ENCODE measurements at regions of chr6 and their contacts with region 1.

Region 1: GRCh38 chr6:7725849-7726415 is at the start of gene BMP6:
- DNase-seq: peak; percentile 69
- ATAC-seq: peak; percentile 77
- H3K4me3 ChIP-seq: peak within 1 kb of the TSS; percentile 61 to 66
- H3K27ac ChIP-seq: no peak within 1 kb of the TSS
- H3K4me1 ChIP-seq: peaks cover 24% of the 10 kb centered on the region
- H3K27me3 ChIP-seq: no peaks in the 10 kb centered on the region
- CTCF ChIP-seq: no peak
- total RNA-seq, gene BMP6: 13.6 TPM

Region 2: DNA sequence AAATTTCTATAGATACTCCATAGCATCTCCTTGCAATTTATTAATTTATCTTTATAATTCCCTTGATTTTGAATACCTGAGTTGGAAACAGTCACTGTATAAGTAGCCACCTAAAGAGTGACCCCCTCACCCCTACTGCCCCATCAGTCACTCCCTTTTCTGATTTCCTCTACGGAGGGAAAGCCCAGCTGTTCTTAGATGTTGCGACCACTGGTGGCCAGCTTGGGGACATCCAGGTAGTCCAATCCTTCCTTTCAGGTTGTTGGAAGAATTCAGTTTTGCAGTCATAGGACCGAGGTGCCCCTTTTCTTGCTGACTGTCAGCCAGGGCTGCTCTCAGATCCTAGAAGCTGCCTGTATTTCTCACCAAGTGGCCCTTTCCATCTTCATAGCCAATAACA is 87.8 kb after region 1 on chr6:
- CTCF ChIA-PET with region 1: no interaction called
- POLR2A ChIA-PET with region 1: no interaction called
- in situ Hi-C with region 1: no loop called
- intact Hi-C with region 1: loop called (anchors 5 kb)
- DNase-seq: no peak
- ATAC-seq: 0 out of 2 replicates have a peak, but pooled peaks have one; percentile 51
- H3K4me3 ChIP-seq: no peak overlapping the region
- H3K27ac ChIP-seq: no peak overlapping the region
- H3K4me1 ChIP-seq: no peaks in the 10 kb centered on the region
- H3K27me3 ChIP-seq: no peaks in the 10 kb centered on the region
- CTCF ChIP-seq: no peak

Region 3: GRCh38 chr6:7910654-7911344 is 184.9 kb after region 1 on chr6 and contains the start of gene TXNDC5:
- CTCF ChIA-PET with region 1: no interaction called
- POLR2A ChIA-PET with region 1: no interaction called
- in situ Hi-C with region 1: no loop called
- intact Hi-C with region 1: loop called (anchors 10 kb)
- DNase-seq: no peak
- ATAC-seq: peak; percentile 91
- H3K4me3 ChIP-seq: peak within 1 kb of the TSS; percentile 66 to 75
- H3K27ac ChIP-seq: peak within 1 kb of the TSS; percentile 92
- H3K4me1 ChIP-seq: peaks cover 13% of the 10 kb centered on the region
- H3K27me3 ChIP-seq: 0 out of 2 replicates have a peak, but pooled peaks cover 2% of the 10 kb centered on the region
- CTCF ChIP-seq: no peak
- total RNA-seq, gene TXNDC5: 177 TPM

Region 4: GRCh38 chr6:8006208-8006607 is 280.3 kb after region 1 on chr6:
- CTCF ChIA-PET with region 1: interaction called, 11 read pairs
- POLR2A ChIA-PET with region 1: no interaction called
- in situ Hi-C with region 1: no loop called
- intact Hi-C with region 1: loop called (anchors 1 kb)
- DNase-seq: no peak
- ATAC-seq: no peak
- H3K4me3 ChIP-seq: no peak overlapping the region
- H3K27ac ChIP-seq: no peak overlapping the region
- H3K4me1 ChIP-seq: no peaks in the 10 kb centered on the region
- H3K27me3 ChIP-seq: no peaks in the 10 kb centered on the region
- CTCF ChIP-seq: peak; percentile 51; the same call in 1 of the 2 replicates

Region 5: DNA sequence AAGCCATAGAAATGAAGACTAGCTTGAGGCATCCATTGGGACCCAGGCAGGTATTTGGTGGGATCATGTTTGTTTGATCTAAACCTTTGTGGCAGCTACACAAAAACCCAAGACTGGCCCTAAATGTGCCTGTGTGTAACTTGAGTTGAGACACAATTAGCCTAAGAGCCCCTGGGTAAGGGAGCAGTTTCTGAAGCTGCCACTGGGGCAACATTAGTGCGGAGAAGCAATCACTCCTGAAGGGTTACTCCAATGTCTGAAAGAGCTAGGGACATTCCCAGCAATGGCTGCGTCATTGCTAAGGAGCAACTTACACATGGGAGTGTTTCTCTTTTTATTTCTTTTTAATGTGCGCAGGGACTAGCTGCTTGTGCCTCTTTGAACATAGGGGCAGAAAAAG is 444.3 kb after region 1 on chr6:
- CTCF ChIA-PET with region 1: no interaction called
- POLR2A ChIA-PET with region 1: no interaction called
- in situ Hi-C with region 1: no loop called
- intact Hi-C with region 1: loop called (anchors 5 kb)
- DNase-seq: no peak
- ATAC-seq: no peak
- H3K4me3 ChIP-seq: no peak overlapping the region
- H3K27ac ChIP-seq: peak overlapping the region; percentile 65; the same call in 1 of the 2 replicates
- H3K4me1 ChIP-seq: peaks cover 10% of the 10 kb centered on the region
- H3K27me3 ChIP-seq: no peaks in the 10 kb centered on the region
- CTCF ChIP-seq: peak; percentile 30

Measured in Panc1 (cell line).